ENCODE measurements at regions of chr1 and their contacts with region 1.

Region 1: DNA sequence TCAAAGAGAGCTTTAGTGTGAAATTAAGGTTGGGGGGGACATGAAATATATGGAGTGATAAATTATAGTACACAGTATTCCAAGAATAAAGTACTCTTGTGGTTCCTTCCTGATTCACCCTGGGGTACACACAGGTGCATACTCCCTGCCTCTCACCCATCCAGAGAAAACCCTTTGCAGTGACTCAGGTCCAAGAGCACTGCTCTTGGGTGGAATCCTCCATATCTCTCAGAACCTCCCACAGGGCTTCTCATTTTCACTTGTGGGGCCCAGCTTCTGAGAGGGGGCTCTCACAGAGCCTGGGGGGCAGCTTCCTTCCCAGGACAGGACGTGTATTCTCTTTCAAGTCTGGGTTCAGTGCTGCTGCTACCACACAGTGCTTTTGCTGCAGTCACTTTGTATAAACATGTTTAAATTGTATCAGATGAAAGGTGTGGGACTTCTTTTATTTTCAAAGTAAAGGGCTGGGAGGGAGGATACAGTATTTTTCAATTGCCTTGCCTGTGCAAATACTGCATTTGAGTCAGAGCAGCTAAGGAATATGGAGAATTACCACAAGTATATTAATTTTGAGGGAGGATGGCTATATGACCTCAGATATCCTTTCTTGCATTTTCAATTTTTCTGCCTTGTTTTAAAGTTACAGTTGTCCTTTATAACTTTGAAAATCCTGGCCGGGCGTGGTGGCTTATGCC is 24.9 kb upstream of the BMP8A start:
- DNase-seq: no peak
- H3K4me3 ChIP-seq: no peak overlapping the region
- H3K27ac ChIP-seq: no peak overlapping the region
- H3K4me1 ChIP-seq: no peaks in the 10 kb centered on the region
- H3K27me3 ChIP-seq: no peaks in the 10 kb centered on the region
- CTCF ChIP-seq: no peak

Region 2: DNA sequence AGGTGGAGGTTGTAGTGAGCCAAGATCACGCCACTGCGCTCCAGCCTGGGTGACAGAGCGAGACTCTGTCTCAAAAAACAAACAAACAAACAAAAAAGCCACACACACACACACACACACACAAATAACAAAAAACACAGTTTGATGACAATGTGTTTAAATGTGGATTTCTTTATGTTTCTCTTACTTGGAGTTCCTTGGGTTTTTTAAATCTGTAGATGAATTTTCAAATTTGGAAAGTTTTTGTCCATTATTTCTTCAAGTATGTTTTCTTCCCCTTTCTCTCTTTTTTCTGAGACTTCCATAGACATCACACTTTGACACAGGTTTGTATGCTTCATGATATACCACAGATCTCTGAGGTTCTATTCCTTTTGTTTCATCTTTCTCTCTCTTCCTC is 260.0 kb after region 1 on chr1:
- CTCF ChIA-PET with region 1: no interaction called
- POLR2A ChIA-PET with region 1: interaction called, 10 read pairs
- intact Hi-C with region 1: no loop called
- DNase-seq: no peak
- H3K4me3 ChIP-seq: no peak overlapping the region
- H3K27ac ChIP-seq: no peak overlapping the region
- H3K4me1 ChIP-seq: no peaks in the 10 kb centered on the region
- H3K27me3 ChIP-seq: peaks cover 68% of the 10 kb centered on the region
- CTCF ChIP-seq: no peak

Measured in A673 (cell line).